ENCODE measurements at regions of chr14 and their contacts with region 1.

Region 1: DNA sequence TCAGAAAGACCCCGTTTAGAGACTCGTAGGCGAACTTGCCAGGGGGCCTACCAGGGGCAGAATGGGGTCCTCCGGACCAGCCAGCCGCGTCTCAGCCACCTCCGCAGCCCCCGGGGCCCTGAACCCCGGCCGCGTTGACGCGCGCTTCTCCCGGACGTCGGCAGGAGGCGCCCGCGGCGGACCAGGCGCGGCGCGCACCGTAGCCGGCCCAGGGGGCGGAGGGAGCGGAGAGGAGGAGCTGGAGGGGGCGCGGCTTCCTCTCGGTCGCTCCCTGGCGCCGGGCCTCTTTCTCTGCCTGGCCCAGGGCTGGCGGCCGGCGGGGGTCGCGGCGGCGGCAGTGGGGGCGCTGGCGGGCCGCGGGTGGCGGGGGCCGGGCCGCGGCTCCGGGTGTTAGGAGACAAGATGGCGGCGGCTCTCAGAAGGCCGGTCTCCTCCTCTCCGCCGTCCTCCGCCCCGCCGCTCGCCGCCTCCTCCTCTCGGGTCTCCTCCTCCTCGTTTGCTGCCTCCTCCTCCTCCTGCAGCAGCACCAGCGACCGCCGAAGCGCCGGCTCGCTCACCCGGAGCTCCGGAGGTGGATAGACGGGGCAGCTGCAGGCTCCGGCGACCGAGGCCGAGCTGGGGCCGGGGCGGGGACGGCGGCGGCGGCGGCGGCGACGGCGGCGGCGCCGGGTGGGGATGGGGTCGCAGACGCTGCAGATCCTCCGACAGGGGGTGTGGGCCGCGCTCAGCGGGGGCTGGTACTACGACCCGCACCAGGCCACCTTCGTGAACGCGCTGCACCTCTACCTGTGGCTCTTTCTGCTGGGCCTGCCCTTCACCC is at the start of gene PCNX1:
- DNase-seq: peak; percentile 83 to 96 (median 89)
- ATAC-seq: peak; percentile 81
- H3K4me3 ChIP-seq: peak within 1 kb of the TSS; percentile 95
- H3K4me3 Mint-ChIP-seq: peak within 1 kb of the TSS; percentile 93
- H3K27ac ChIP-seq: peak within 1 kb of the TSS; percentile 76 to 85
- H3K27ac Mint-ChIP-seq: peak within 1 kb of the TSS; percentile 92
- H3K4me1 ChIP-seq: peaks cover 38% of the 10 kb centered on the region
- H3K4me1 Mint-ChIP-seq: peaks cover 70% of the 10 kb centered on the region
- H3K27me3 ChIP-seq: no peaks in the 10 kb centered on the region
- H3K27me3 Mint-ChIP-seq: no peaks in the 10 kb centered on the region
- CTCF ChIP-seq: peak; percentile 83
- total RNA-seq, gene PCNX1: 87.1 to 87.6 TPM

Region 2: DNA sequence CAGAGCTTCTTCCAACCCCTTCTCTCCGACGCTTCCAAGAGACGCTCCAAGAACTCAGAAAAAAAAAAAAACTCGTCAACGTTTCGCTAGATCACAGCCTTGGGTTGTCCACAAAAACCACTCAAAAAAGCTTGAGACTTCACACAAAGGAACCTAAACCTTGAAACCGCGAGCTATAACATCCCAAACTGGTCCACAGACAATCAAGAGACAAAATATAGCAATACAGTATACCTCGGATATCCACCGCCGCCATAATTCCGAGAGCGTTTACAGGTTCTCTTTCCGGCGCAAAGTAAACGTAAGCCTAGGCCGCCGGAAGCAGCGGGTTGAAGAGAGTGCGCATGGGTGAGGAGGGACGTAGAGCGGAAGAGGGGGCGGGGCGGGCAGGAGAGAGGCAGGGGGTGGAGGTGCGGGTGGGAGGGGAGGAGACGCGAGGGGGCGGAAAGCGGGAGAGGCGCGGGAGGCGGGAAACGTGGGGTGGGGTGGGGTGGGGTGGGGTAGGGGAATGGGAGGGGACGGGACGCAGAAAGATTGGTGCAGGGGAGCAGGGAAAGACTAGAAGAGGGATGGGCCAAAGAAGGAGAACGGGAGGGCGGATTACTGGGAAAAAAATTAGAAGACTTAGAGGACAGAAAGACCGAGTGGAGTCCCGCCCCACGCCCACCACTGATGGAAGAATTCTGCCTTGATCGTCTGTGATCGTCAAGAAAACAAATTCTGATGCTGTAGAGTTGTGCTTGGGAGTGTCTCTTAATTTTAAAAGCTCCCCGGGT is 306.8 kb before region 1 on chr14 and contains the start of gene MED6:
- CTCF ChIA-PET with region 1: no interaction called
- POLR2A ChIA-PET with region 1: no interaction called
- intact Hi-C with region 1: no loop called
- DNase-seq: peak; percentile 83 to 97 (median 91)
- ATAC-seq: peak; percentile 99
- H3K4me3 ChIP-seq: peak within 1 kb of the TSS; percentile 97
- H3K4me3 Mint-ChIP-seq: peak within 1 kb of the TSS; percentile 100
- H3K27ac ChIP-seq: peak within 1 kb of the TSS; percentile 79 to 92
- H3K27ac Mint-ChIP-seq: peak within 1 kb of the TSS; percentile 99
- H3K4me1 ChIP-seq: peaks cover 15% of the 10 kb centered on the region
- H3K4me1 Mint-ChIP-seq: peaks cover 37% of the 10 kb centered on the region
- H3K27me3 ChIP-seq: no peaks in the 10 kb centered on the region
- H3K27me3 Mint-ChIP-seq: peaks cover 5% of the 10 kb centered on the region
- CTCF ChIP-seq: no peak
- total RNA-seq, gene MED6: 90.2 to 97.2 TPM

Region 3: GRCh38 chr14:70640938-70641547 is 266.3 kb before region 1 on chr14:
- CTCF ChIA-PET with region 1: interaction called, 3 read pairs
- POLR2A ChIA-PET with region 1: interaction called, 8 read pairs
- intact Hi-C with region 1: loop called in 1 of 2 experiments (anchors 5 kb)
- DNase-seq: peak in 13 of 14 experiments; percentile 29 to 79 (median 57)
- ATAC-seq: peak; percentile 69
- H3K4me3 ChIP-seq: peak overlapping the region; percentile 57
- H3K4me3 Mint-ChIP-seq: peak overlapping the region; percentile 98
- H3K27ac ChIP-seq: peak overlapping the region; percentile 32 to 71
- H3K27ac Mint-ChIP-seq: peak overlapping the region; percentile 98
- H3K4me1 ChIP-seq: peaks cover 39% of the 10 kb centered on the region
- H3K4me1 Mint-ChIP-seq: peaks cover 58% of the 10 kb centered on the region
- H3K27me3 ChIP-seq: no peaks in the 10 kb centered on the region
- H3K27me3 Mint-ChIP-seq: no peaks in the 10 kb centered on the region
- CTCF ChIP-seq: no peak

Region 4: DNA sequence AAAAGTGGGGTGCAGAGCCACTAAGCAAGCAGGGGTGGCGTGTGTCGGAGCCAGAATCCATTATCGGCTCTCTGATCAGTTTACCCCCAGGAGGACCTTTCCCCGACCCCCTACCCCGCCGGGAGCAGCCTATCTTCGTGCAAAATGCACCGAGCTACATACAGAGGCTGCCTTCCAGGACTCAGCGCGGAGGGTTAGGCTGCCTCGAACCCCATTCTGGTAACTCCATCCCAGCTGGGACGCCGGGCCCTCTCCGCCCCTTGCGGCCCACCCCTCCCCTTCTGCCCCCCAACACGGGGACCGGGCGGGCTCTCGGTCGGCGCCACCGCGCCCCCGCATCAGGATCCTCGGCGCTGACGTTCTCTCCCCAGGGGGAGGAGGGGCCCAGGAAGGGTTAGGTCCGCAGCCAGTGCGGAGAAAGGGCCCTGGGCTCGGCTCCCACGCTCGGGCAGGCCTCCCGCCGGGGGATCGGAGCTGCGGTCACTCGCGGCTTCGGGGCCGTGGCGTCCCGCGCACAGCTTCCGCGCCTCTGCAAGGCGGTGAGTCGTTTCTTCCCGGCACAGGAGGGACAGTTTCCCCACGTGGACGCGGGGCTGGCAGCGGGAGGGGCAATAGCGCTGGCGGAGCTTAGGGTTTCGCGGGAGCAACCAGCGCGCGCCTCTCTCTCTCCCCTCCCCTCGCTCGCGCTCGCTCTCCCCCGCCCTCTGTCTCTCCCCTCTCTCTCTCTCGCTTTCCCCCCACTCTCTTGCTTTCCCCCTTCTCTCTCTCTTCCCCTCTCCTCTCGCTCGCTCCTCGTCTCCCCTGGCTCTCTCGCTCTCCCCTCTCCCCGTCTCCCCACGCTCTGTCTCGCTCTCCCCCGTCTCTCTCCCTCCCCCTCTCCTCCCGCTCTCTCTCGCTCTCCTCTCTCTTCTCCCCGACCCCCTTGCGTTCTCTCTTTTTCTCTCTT is 85.5 kb before region 1 on chr14:
- CTCF ChIA-PET with region 1: interaction called, 17 read pairs
- POLR2A ChIA-PET with region 1: interaction called, 18 read pairs
- intact Hi-C with region 1: loop called in 1 of 2 experiments (anchors 2 kb)
- DNase-seq: peak in 13 of 14 experiments; percentile 23 to 81 (median 44)
- ATAC-seq: peak; percentile 46
- H3K4me3 ChIP-seq: peak overlapping the region; percentile 66
- H3K4me3 Mint-ChIP-seq: peak overlapping the region; percentile 83
- H3K27ac ChIP-seq: no peak overlapping the region
- H3K27ac Mint-ChIP-seq: no peak overlapping the region
- H3K4me1 ChIP-seq: peaks cover 18% of the 10 kb centered on the region
- H3K4me1 Mint-ChIP-seq: peaks cover 28% of the 10 kb centered on the region
- H3K27me3 ChIP-seq: peaks cover 5 to 15% of the 10 kb centered on the region in 2 experiments
- H3K27me3 Mint-ChIP-seq: peaks cover 43% of the 10 kb centered on the region
- CTCF ChIP-seq: no peak

Region 5: DNA sequence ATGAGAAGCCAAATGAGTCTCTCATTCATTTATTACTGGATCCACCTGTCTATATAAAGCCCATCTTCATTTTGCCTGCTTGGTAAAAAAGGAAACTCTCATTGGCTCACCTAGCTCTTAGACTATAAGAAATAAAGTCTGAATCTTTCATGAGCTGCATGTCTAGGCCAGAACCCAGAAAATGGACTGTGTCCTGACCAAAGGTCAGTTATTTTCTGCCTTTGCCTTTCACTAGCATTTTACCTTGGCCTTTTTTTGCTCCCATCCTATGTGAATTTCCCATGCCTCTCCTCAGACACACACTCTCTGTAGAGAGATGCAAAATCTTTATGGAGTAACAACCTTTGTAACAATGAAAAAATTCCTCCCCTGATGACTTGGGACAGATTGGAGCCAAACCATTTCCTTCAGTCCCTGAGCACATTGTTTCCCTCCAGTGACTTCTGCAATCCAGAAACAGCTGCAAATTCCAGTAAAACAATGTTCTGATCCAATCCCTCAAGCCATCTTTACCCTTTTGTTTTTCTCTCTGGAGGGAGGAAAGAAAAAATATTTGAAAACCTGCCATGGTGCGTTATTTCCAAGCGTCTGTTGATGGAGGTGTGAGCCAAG is 64.4 kb before region 1 on chr14:
- CTCF ChIA-PET with region 1: no interaction called
- POLR2A ChIA-PET with region 1: no interaction called
- intact Hi-C with region 1: no loop called
- DNase-seq: no peak
- ATAC-seq: no peak
- H3K4me3 ChIP-seq: no peak overlapping the region
- H3K4me3 Mint-ChIP-seq: no peak overlapping the region
- H3K27ac ChIP-seq: no peak overlapping the region
- H3K27ac Mint-ChIP-seq: no peak overlapping the region
- H3K4me1 ChIP-seq: no peaks in the 10 kb centered on the region
- H3K4me1 Mint-ChIP-seq: no peaks in the 10 kb centered on the region
- H3K27me3 ChIP-seq: no peaks in the 10 kb centered on the region
- H3K27me3 Mint-ChIP-seq: no peaks in the 10 kb centered on the region
- CTCF ChIP-seq: no peak

Region 6: GRCh38 chr14:70919774-70920173 is 12.4 kb after region 1 on chr14:
- CTCF ChIA-PET with region 1: interaction called, 31 read pairs
- POLR2A ChIA-PET with region 1: interaction called, 57 read pairs
- intact Hi-C with region 1: loop called in 1 of 2 experiments (anchors 2 kb)
- DNase-seq: peak in 5 of 14 experiments; percentile 24 to 58 (median 45)
- ATAC-seq: peak; percentile 59
- H3K4me3 ChIP-seq: no peak overlapping the region
- H3K4me3 Mint-ChIP-seq: peak overlapping the region; percentile 48
- H3K27ac ChIP-seq: peak overlapping the region in 1 of 2 donors; percentile 28
- H3K27ac Mint-ChIP-seq: peak overlapping the region; percentile 88
- H3K4me1 ChIP-seq: peaks cover 28% of the 10 kb centered on the region
- H3K4me1 Mint-ChIP-seq: peaks cover 95% of the 10 kb centered on the region
- H3K27me3 ChIP-seq: no peaks in the 10 kb centered on the region
- H3K27me3 Mint-ChIP-seq: no peaks in the 10 kb centered on the region
- CTCF ChIP-seq: no peak

Region 7: DNA sequence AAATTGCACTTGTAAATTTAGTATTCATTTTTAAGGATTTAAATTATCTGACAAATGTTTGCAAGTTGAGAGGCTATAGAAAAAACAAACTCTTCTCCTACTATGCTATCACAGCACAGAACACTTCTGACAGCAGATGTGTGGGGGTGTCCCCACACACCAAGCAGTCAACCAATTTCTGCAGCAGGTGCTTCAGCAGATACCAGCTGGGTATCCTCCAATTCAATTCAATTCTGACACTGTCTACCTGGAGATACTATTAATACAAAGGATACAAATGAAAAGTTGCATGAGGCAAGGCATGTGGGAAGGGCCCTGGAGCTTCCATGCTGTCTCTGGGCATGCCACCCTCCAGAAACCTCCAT is 34.9 kb after region 1 on chr14:
- CTCF ChIA-PET with region 1: interaction called, 17 read pairs
- POLR2A ChIA-PET with region 1: interaction called, 43 read pairs
- intact Hi-C with region 1: loop called (anchors 2 kb)
- DNase-seq: no peak
- ATAC-seq: no peak
- H3K4me3 ChIP-seq: no peak overlapping the region
- H3K4me3 Mint-ChIP-seq: peak overlapping the region; percentile 45
- H3K27ac ChIP-seq: no peak overlapping the region
- H3K27ac Mint-ChIP-seq: peak overlapping the region; percentile 96
- H3K4me1 ChIP-seq: peaks cover 25% of the 10 kb centered on the region
- H3K4me1 Mint-ChIP-seq: peaks cover 85% of the 10 kb centered on the region
- H3K27me3 ChIP-seq: no peaks in the 10 kb centered on the region
- H3K27me3 Mint-ChIP-seq: no peaks in the 10 kb centered on the region
- CTCF ChIP-seq: no peak

Region 8: DNA sequence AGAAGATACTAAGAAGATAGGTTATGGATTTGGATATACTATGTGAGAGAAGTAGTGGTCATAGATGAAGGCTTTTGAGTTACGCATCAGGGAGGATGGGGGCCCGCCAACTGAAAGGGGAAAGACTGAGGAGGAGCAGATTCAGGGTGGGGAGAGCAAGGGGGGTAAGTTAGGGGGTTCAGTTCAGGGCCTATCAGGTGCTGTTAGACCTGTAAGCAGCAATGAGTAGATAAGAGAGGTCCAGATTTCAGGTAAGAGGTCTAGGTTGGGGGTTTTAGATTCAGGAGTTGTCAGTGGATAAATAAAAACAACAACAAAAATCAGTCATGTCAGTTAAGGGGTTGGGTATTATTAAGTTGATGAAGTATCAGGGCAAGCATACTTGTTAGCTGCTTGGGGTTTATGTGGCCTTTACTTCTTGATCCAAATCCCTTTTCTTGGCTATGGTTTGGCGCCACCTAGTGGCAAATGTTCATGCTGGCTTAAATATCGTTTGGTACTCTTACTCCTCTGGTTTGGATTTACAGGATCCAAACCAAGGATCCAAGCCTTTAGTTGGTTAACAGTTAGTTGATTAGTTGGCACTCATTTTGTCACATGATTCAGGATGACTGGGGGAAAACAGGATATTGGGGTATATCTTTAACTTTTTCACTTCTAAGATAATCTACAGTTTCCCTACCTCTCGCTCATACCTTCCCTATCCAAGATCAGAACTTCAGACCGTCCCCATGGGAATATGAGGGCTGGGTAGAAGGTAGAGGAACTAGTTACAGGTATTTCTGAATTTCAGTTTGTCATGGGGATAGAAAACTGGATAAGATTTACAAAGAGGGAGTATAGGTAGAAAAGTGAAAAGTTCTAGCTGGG is 65.0 kb after region 1 on chr14:
- CTCF ChIA-PET with region 1: interaction called, 19 read pairs
- POLR2A ChIA-PET with region 1: interaction called, 12 read pairs
- intact Hi-C with region 1: loop called (anchors 1 to 5 kb)
- DNase-seq: peak; percentile 68 to 92 (median 82)
- ATAC-seq: peak; percentile 80
- H3K4me3 ChIP-seq: no peak overlapping the region
- H3K4me3 Mint-ChIP-seq: no peak overlapping the region
- H3K27ac ChIP-seq: peak overlapping the region in 1 of 2 donors; percentile 18
- H3K27ac Mint-ChIP-seq: peak overlapping the region; percentile 20
- H3K4me1 ChIP-seq: peaks cover 23% of the 10 kb centered on the region
- H3K4me1 Mint-ChIP-seq: peaks cover 56% of the 10 kb centered on the region
- H3K27me3 ChIP-seq: no peaks in the 10 kb centered on the region
- H3K27me3 Mint-ChIP-seq: no peaks in the 10 kb centered on the region
- CTCF ChIP-seq: peak; percentile 87

Region 9: GRCh38 chr14:71320107-71320733 is 412.8 kb after region 1 on chr14:
- CTCF ChIA-PET with region 1: no interaction called
- POLR2A ChIA-PET with region 1: no interaction called
- intact Hi-C with region 1: no loop called
- DNase-seq: peak; percentile 96 to 100 (median 98)
- ATAC-seq: peak; percentile 85
- H3K4me3 ChIP-seq: peak within 1 kb of the TSS; percentile 85
- H3K4me3 Mint-ChIP-seq: peak within 1 kb of the TSS; percentile 94
- H3K27ac ChIP-seq: peak within 1 kb of the TSS; percentile 85 to 97
- H3K27ac Mint-ChIP-seq: peak within 1 kb of the TSS; percentile 89
- H3K4me1 ChIP-seq: peaks cover 20% of the 10 kb centered on the region
- H3K4me1 Mint-ChIP-seq: peaks cover 47% of the 10 kb centered on the region
- H3K27me3 ChIP-seq: no peaks in the 10 kb centered on the region
- H3K27me3 Mint-ChIP-seq: no peaks in the 10 kb centered on the region
- CTCF ChIP-seq: no peak

Measured in CD4-positive, alpha-beta T cell (primary cell).